ENCODE measurements at regions of chr16 and their contacts with region 1.

Region 1: DNA sequence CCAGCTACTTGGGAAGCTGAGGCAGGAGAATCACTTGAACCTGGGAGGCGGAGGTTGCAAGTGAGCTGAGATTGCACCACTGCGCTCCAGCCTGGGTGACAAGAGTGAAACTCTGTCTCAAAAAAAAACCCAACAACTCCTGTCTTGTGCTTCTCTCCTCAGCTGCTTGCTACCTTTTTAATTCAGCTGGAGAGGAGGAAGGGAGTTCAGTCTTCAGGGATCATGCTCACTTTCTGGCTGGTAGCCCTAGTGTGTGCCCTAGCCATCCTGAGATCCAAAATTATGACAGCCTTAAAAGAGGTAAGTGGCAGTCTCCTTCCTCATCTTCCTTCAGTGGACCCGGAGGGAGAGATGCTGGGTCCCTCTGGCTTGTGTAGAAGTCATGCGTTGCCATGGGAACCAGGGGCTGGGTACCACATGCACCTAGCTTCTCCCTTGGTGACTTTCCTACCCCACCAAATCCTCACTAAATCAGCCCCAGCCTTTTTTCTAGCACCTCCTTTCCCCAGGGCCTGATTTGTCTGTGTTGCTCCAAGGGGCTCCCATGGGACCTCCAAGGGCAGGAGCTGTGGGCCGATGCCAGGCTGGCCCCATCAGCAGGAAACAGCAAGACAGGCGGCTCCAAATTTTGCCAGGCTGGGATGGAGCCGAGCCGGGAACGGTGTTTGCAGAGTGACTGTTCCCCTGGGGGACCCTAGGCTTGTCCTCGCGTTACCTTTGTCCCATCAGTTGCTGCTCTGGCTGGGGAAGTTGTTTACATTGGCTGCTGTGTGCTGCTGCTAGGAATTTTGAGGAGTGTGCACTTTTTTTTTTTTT is 65.1 kb downstream of the ABCC1 start:
- ATAC-seq: peak in 1 of 8 experiments; percentile 81
- H3K4me3 ChIP-seq: no peak overlapping the region
- H3K27ac ChIP-seq: no peak overlapping the region
- H3K4me1 ChIP-seq: no peaks in the 10 kb centered on the region

Region 2: GRCh38 chr16:16073891-16074881 is 59.6 kb after region 1 on chr16:
- in situ Hi-C with region 1: loop called in 1 of 9 experiments (anchors 10 kb)
- ATAC-seq: peak in 3 of 8 experiments; percentile 20 to 75 (median 63)
- H3K4me3 ChIP-seq: no peak overlapping the region
- H3K27ac ChIP-seq: no peak overlapping the region
- H3K4me1 ChIP-seq: no peaks in the 10 kb centered on the region

Region 3: DNA sequence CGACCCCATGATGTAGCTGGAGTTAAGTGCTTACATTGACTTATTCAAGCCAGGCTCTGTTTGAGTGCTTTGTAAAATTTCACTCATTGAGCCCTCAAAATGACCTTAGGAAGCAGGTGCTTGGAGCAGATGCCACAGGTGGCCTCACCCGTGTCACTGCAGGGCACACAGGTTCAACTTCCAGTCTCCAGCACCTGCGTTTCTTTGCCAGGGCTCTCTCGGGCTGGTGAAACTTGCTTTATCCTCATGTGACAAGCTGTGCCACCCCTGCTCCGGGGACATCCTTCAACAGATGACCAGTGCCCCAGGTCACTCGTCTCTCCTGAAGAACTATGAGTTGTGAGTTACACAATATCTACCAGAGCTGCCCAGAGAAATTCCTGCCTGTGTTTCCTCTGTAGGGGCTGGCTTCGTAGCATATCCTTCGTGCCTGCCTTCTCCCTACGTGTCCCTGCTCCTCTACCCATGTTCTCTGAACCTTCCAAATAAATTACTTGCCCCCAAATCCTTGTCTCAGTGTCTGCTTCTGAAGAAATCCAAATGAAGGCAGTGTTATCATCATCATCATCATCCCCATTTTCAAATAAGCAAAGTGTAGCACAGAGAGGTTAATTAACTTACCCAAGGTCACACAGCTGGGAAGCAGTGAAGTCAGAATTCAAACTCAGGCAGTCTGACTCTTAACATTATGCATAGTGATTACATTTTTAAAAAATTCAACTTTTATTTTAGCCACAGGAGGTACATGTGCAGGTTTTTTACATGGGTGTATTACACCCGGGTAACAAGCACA is 1969.5 kb after region 1 on chr16:
- in situ Hi-C with region 1: no loop called
- ATAC-seq: no peak
- H3K4me3 ChIP-seq: no peak overlapping the region
- H3K27ac ChIP-seq: no peak overlapping the region
- H3K4me1 ChIP-seq: peaks cover 23 to 45% of the 10 kb centered on the region in 2 donors

Measured in motor neuron (in vitro differentiated cells).